ENCODE measurements at regions of chr5 and their contacts with region 1.

Region 1: DNA sequence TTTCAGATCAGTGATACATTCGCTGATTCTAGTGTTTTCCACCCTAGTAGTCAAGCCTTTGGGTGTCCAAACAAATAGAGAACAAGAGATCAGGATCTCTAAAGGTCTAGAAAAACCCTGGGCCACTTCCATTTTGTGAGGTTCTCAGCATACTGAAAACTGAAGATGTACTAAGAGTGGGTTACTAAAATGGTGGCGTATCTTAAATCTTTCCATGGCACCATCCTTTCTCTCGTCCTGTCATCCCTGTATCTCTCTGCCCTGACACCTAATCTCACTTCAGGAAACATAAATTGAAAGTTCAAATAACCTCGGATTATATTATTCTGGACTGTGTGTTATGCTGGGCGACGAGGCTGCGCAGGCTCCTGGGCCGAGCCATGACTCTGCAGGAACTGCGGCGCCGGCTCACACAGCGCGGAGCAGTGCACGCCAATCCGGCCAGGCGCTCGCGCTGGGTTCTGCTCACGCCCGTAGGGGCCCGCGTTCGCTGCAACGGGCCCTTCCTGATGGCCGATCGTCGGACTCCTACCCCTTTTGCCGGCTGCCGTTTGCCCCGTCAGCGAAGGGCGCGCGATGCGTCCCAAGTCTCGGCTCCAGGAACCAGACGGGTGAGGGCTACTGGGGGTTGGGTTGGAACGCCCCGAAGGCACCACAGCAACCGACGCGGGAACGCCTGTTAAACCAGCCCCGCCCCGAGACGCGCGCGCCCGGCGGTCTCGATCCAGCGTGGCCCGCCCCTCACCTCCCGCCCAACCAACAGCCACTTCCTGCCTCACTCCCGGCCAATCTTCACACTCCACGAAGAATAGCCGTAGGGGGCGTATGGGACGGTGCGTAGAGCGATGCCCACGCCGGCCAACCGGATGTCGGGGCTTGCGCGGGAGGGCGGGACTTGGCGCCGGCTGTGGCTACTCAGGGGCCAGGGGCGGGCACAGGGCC is 503 bp upstream of the CANX start:
- DNase-seq: peak; percentile 96
- ATAC-seq: peak; percentile 93
- H3K4me3 ChIP-seq: peak overlapping the region; percentile 72
- H3K27ac ChIP-seq: peak overlapping the region; percentile 98
- H3K4me1 ChIP-seq: peaks cover 14% of the 10 kb centered on the region
- H3K27me3 ChIP-seq: no peaks in the 10 kb centered on the region
- CTCF ChIP-seq: no peak
- EP300 ChIP-seq: 0 out of 4 replicates have a peak, but pooled peaks of 1 of the 2 experiments have one; percentile 27
- POLR2A ChIP-seq: peak; percentile 90
- RAD21 ChIP-seq: no peak

Region 2: GRCh38 chr5:179623003-179623880 is 75.0 kb before region 1 on chr5 and contains the start of gene HNRNPH1:
- CTCF ChIA-PET with region 1: interaction called, 3 read pairs
- POLR2A ChIA-PET with region 1: interaction called, 6 read pairs
- RAD21 ChIA-PET with region 1: no interaction called
- SMC1A ChIA-PET with region 1: interaction called, 3 read pairs
- in situ Hi-C with region 1: no loop called
- intact Hi-C with region 1: loop called (anchors 2 kb)
- DNase-seq: peak; percentile 97
- ATAC-seq: peak; percentile 81
- H3K4me3 ChIP-seq: peak within 1 kb of the TSS; percentile 95
- H3K27ac ChIP-seq: peak within 1 kb of the TSS; percentile 98
- H3K4me1 ChIP-seq: peaks cover 7% of the 10 kb centered on the region
- H3K27me3 ChIP-seq: no peaks in the 10 kb centered on the region
- CTCF ChIP-seq: no peak; a peak in 1 of 6 replicates
- EP300 ChIP-seq: peak in 1 of 2 experiments; percentile 45; a peak in 1 of 4 replicates
- POLR2A ChIP-seq: peak; percentile 99
- RAD21 ChIP-seq: no peak
- polyA plus RNA-seq, gene HNRNPH1: 184 to 189 TPM

Region 3: GRCh38 chr5:179678223-179679013 is 19.8 kb before region 1 on chr5:
- CTCF ChIA-PET with region 1: interaction called, 24 read pairs
- POLR2A ChIA-PET with region 1: interaction called, 14 read pairs
- RAD21 ChIA-PET with region 1: interaction called, 11 read pairs
- SMC1A ChIA-PET with region 1: interaction called, 15 read pairs
- in situ Hi-C with region 1: no loop called
- intact Hi-C with region 1: loop called (anchors 1 kb)
- DNase-seq: peak; percentile 86
- ATAC-seq: peak; percentile 92
- H3K4me3 ChIP-seq: peak overlapping the region; percentile 76
- H3K27ac ChIP-seq: peak overlapping the region; percentile 94
- H3K4me1 ChIP-seq: peaks cover 11% of the 10 kb centered on the region
- H3K27me3 ChIP-seq: no peaks in the 10 kb centered on the region
- CTCF ChIP-seq: peak in 1 of 3 experiments; percentile 21; a peak in 1 of 6 replicates
- EP300 ChIP-seq: no peak
- POLR2A ChIP-seq: peak; percentile 99
- RAD21 ChIP-seq: no peak

Region 4: GRCh38 chr5:179732417-179732917 is 34.2 kb after region 1 on chr5 and contains the start of gene MAML1:
- CTCF ChIA-PET with region 1: interaction called, 5 read pairs
- POLR2A ChIA-PET with region 1: interaction called, 11 read pairs
- RAD21 ChIA-PET with region 1: interaction called, 4 read pairs
- SMC1A ChIA-PET with region 1: interaction called, 6 read pairs
- in situ Hi-C with region 1: no loop called
- intact Hi-C with region 1: loop called (anchors 2 kb)
- DNase-seq: peak; percentile 98
- ATAC-seq: peak; percentile 97
- H3K4me3 ChIP-seq: peak within 1 kb of the TSS; percentile 84
- H3K27ac ChIP-seq: peak within 1 kb of the TSS; percentile 83
- H3K4me1 ChIP-seq: peaks cover 6% of the 10 kb centered on the region; the same call in 1 of the 2 replicates
- H3K27me3 ChIP-seq: no peaks in the 10 kb centered on the region
- CTCF ChIP-seq: no peak
- EP300 ChIP-seq: no peak
- POLR2A ChIP-seq: peak; percentile 83
- RAD21 ChIP-seq: no peak
- polyA plus RNA-seq, gene MAML1: 0.42 to 1.2 TPM

Region 5: GRCh38 chr5:180769821-180770220 is 1071.6 kb after region 1 on chr5:
- CTCF ChIA-PET with region 1: no interaction called
- POLR2A ChIA-PET with region 1: no interaction called
- RAD21 ChIA-PET with region 1: no interaction called
- SMC1A ChIA-PET with region 1: no interaction called
- in situ Hi-C with region 1: no loop called
- intact Hi-C with region 1: no loop called
- DNase-seq: no peak
- ATAC-seq: no peak
- H3K4me3 ChIP-seq: no peak overlapping the region
- H3K27ac ChIP-seq: no peak overlapping the region
- H3K4me1 ChIP-seq: no peaks in the 10 kb centered on the region
- H3K27me3 ChIP-seq: no peaks in the 10 kb centered on the region
- CTCF ChIP-seq: no peak
- EP300 ChIP-seq: no peak
- POLR2A ChIP-seq: no peak
- RAD21 ChIP-seq: no peak

Measured in GM12878 (cell line).